HepG2 (cell line): ENCODE measurements at regions of chr1 and their contacts with region 1.

Region 1: GRCh38 chr1:213987927-213988506 is at the start of gene PROX1:
- DNase-seq: no peak
- ATAC-seq: peak; percentile 69
- H3K4me3 ChIP-seq: peak within 1 kb of the TSS; percentile 82 to 94 (median 84)
- H3K27ac ChIP-seq: peak within 1 kb of the TSS; percentile 72
- H3K4me1 ChIP-seq: peaks cover 59% of the 10 kb centered on the region
- H3K27me3 ChIP-seq: no peaks in the 10 kb centered on the region; a peak in 1 of 5 replicates
- CTCF ChIP-seq: no peak
- EP300 ChIP-seq: no peak
- POLR2A ChIP-seq: peak; percentile 77 to 79
- RAD21 ChIP-seq: 0 out of 2 replicates have a peak, but pooled peaks have one; percentile 23
- total RNA-seq, gene PROX1: 30.2 and 48.5 TPM in 2 replicates

Region 2: GRCh38 chr1:213564215-213564659 is 423.8 kb before region 1 on chr1:
- CTCF ChIA-PET with region 1: no interaction called
- POLR2A ChIA-PET with region 1: interaction called, 15 read pairs
- in situ Hi-C with region 1: loop called (anchors 10 kb)
- intact Hi-C with region 1: loop called (anchors 2 kb)
- DNase-seq: peak; percentile 79
- ATAC-seq: peak; percentile 71
- H3K4me3 ChIP-seq: no peak overlapping the region
- H3K27ac ChIP-seq: peak overlapping the region; percentile 38
- H3K4me1 ChIP-seq: peaks cover 30% of the 10 kb centered on the region
- H3K27me3 ChIP-seq: no peaks in the 10 kb centered on the region
- CTCF ChIP-seq: peak; percentile 62
- EP300 ChIP-seq: peak in 1 of 2 experiments; percentile 31; a peak in 1 of 4 replicates
- POLR2A ChIP-seq: no peak
- RAD21 ChIP-seq: peak; percentile 77

Region 3: GRCh38 chr1:213793482-213794067 is 194.4 kb before region 1 on chr1:
- CTCF ChIA-PET with region 1: no interaction called
- POLR2A ChIA-PET with region 1: interaction called, 6 read pairs
- in situ Hi-C with region 1: no loop called
- intact Hi-C with region 1: loop called (anchors 10 kb)
- DNase-seq: peak; percentile 93
- ATAC-seq: peak; percentile 95
- H3K4me3 ChIP-seq: peak overlapping the region in 1 of 3 experiments; percentile 15; a peak in 1 of 6 replicates
- H3K27ac ChIP-seq: peak overlapping the region; percentile 74
- H3K4me1 ChIP-seq: peaks cover 70% of the 10 kb centered on the region
- H3K27me3 ChIP-seq: no peaks in the 10 kb centered on the region
- CTCF ChIP-seq: no peak
- EP300 ChIP-seq: peak in 1 of 2 experiments; percentile 82; a peak in 2 of 4 replicates
- POLR2A ChIP-seq: no peak
- RAD21 ChIP-seq: 0 out of 2 replicates have a peak, but pooled peaks have one; percentile 23

Region 4: DNA sequence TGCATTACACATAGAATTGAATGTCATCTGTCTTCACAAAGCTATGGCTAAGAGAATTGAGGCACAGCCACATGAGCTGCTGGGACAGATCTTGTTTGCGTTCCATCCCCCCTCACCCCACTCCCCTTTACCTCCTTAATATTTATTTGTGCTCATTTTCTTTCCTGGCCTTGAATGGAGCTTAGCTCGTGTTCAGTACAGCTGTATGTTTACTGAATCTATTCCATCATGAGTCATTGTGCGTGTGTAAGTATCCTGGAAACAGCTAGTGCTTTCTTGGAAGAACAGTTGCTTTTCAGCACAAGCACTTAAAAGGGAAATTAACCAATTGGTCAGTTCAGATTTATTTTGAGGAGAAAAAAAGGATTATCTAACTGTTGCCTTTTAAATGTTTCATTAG is 14.5 kb after region 1 on chr1:
- CTCF ChIA-PET with region 1: no interaction called
- POLR2A ChIA-PET with region 1: interaction called, 56 read pairs
- in situ Hi-C with region 1: no loop called
- intact Hi-C with region 1: loop called (anchors 2 kb)
- DNase-seq: peak; percentile 78
- ATAC-seq: peak; percentile 72
- H3K4me3 ChIP-seq: no peak overlapping the region
- H3K27ac ChIP-seq: peak overlapping the region; percentile 50
- H3K4me1 ChIP-seq: peaks cover 83% of the 10 kb centered on the region
- H3K27me3 ChIP-seq: no peaks in the 10 kb centered on the region
- CTCF ChIP-seq: no peak
- EP300 ChIP-seq: peak in 1 of 2 experiments; percentile 78; a peak in 2 of 4 replicates
- POLR2A ChIP-seq: no peak
- RAD21 ChIP-seq: no peak

Region 5: DNA sequence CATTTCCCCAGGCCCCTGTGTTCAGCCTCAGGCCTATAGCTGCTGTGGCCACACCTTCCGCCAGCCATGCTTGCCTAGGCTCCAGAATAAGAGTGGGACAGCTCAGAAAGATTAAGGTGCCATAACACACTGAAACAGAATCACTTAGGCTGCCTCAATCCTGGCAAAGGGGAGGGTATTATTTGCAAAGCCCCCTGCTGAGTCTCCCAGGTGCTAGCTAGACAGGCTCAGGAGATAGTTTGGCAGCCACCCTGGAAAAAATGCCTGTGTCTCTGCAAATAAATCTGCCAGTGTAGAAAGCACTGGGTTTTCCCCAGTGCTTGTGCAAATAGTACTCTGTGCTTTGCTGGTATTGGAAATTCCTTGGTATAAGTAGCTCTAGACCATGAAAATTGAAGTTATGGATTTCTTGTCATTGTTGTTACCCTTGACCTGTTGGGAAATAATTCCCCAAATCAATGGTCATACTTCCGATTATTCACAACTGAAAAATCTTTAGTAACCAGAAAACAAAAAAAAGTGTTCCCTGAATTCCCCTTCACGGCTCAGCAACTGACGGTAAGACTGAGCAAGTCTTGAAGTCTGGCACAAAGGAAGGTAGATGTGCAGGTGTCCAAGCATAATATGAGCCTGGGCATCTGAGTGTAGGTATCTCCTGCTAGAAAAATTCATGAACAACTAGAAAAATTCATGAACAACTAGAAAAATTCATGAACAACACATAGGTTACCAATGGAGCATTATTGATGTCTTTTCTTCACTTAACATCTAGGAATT is 56.6 kb after region 1 on chr1:
- CTCF ChIA-PET with region 1: no interaction called
- POLR2A ChIA-PET with region 1: interaction called, 107 read pairs
- in situ Hi-C with region 1: no loop called
- intact Hi-C with region 1: no loop called
- DNase-seq: peak; percentile 81
- ATAC-seq: peak; percentile 91
- H3K4me3 ChIP-seq: no peak overlapping the region; a peak in 1 of 6 replicates
- H3K27ac ChIP-seq: peak overlapping the region; percentile 79
- H3K4me1 ChIP-seq: peaks cover 79% of the 10 kb centered on the region
- H3K27me3 ChIP-seq: no peaks in the 10 kb centered on the region; a peak in 1 of 5 replicates
- CTCF ChIP-seq: no peak
- EP300 ChIP-seq: peak; percentile 42 to 87
- POLR2A ChIP-seq: no peak
- RAD21 ChIP-seq: no peak